CD4-positive, alpha-beta T cell (primary cell): ENCODE measurements at regions of chr14 and their contacts with region 1.

Region 1: DNA sequence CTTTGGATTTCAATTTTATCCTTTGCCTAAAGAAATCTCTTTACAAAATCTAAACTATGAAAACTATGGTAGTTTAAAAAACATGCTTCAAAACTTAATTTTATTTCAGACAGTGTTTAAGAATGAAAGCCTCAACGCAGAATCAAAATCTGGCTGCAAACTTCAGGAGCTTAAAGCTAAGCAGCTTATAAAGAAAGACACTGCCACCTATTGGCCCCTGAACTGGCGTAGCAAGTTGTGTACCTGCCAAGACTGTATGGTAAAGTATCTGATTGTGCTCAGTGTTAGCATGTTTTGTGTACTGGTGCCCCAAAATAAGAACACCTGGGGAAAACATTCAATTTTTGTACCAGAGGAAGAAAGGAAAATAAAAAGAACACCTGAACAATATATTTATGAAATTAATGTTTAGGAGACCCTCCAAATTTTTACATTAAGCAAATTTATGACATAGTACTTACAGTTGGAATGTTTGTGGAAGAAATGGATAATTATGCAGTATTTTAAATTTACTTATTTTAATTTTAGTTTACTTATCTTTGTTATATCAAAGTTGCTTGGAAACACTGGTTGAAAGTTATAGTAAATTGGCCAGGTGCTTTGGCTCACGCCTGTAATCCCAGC is 12.2 kb downstream of the UBR7 start:
- DNase-seq: peak in 13 of 14 experiments; percentile 17 to 82 (median 37)
- ATAC-seq: peak; percentile 93
- H3K4me3 ChIP-seq: no peak overlapping the region
- H3K4me3 Mint-ChIP-seq: no peak overlapping the region
- H3K27ac ChIP-seq: no peak overlapping the region
- H3K27ac Mint-ChIP-seq: no peak overlapping the region
- H3K4me1 ChIP-seq: no peaks in the 10 kb centered on the region
- H3K4me1 Mint-ChIP-seq: no peaks in the 10 kb centered on the region
- H3K27me3 ChIP-seq: no peaks in the 10 kb centered on the region
- H3K27me3 Mint-ChIP-seq: no peaks in the 10 kb centered on the region
- CTCF ChIP-seq: peak; percentile 79

Region 2: DNA sequence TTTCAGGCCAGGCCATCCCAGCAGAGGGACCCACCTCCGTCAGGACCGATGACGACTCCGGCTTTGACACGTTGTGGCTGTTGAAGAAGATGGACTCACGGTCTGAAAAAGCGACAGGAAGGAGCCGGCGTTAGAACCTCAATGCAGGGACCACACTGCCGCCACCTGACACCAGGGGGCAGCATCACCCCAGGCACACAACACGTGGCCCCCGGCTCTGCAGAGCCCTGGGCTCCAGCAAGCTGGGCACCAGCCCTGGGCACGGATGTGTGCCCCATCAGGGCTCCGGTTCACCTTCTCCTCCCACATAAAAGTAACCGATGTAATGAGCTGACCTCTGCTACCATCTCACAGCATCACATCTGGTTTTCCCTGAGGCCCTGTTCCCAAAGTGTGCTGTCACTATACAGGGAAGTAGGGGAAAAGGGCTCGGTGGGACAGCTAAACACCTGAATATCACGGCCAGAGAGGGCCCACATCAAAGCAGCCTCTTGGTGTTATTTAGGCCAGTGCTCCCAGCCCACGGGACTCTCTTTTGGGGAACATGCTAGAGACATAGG is 267.2 kb before region 1 on chr14:
- CTCF ChIA-PET with region 1: interaction called, 6 read pairs
- POLR2A ChIA-PET with region 1: no interaction called
- intact Hi-C with region 1: loop called (anchors 1 to 2 kb)
- DNase-seq: peak; percentile 57 to 87 (median 76)
- ATAC-seq: peak; percentile 97
- H3K4me3 ChIP-seq: no peak overlapping the region
- H3K4me3 Mint-ChIP-seq: no peak overlapping the region
- H3K27ac ChIP-seq: no peak overlapping the region
- H3K27ac Mint-ChIP-seq: no peak overlapping the region
- H3K4me1 ChIP-seq: peaks cover 8% of the 10 kb centered on the region
- H3K4me1 Mint-ChIP-seq: peaks cover 4% of the 10 kb centered on the region
- H3K27me3 ChIP-seq: no peaks in the 10 kb centered on the region
- H3K27me3 Mint-ChIP-seq: no peaks in the 10 kb centered on the region
- CTCF ChIP-seq: peak; percentile 91

Region 3: GRCh38 chr14:93007225-93007997 is 211.8 kb before region 1 on chr14:
- CTCF ChIA-PET with region 1: no interaction called
- POLR2A ChIA-PET with region 1: no interaction called
- intact Hi-C with region 1: no loop called
- DNase-seq: peak in 3 of 14 experiments; percentile 7 to 57 (median 42)
- ATAC-seq: no peak
- H3K4me3 ChIP-seq: no peak overlapping the region
- H3K4me3 Mint-ChIP-seq: no peak overlapping the region
- H3K27ac ChIP-seq: no peak overlapping the region
- H3K27ac Mint-ChIP-seq: no peak overlapping the region
- H3K4me1 ChIP-seq: no peaks in the 10 kb centered on the region
- H3K4me1 Mint-ChIP-seq: peaks cover 4% of the 10 kb centered on the region
- H3K27me3 ChIP-seq: no peaks in the 10 kb centered on the region
- H3K27me3 Mint-ChIP-seq: no peaks in the 10 kb centered on the region
- CTCF ChIP-seq: no peak

Region 4: DNA sequence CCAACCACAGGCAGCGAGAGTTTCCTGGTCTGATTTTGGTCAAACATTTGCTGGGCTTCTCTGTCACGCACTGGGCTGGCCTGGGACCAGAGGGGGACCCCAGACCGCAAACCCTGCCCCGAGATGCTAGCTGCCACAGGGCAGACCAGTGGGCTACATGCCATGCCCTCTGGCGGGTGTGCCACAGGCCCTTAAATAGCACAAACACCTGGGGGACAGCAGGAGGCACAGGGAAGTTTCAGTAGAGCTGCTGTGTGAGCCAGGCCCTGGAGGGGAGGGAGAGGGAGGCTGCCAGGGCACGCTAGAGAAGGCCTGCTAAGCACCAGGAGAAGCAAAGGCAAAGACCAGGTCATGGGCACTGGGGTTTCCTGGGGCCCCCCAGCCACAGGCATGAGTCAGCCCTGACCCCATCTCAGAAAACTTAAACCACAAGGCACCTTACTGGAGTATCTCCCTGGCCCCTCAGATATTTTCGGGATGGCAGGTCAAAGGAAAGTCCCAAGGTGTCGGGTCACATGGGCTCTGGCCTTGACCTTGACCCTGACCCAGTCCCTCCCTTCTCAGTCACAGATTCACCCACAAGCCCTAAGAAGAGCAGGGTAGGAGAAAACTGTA is 132.7 kb before region 1 on chr14:
- CTCF ChIA-PET with region 1: no interaction called
- POLR2A ChIA-PET with region 1: no interaction called
- intact Hi-C with region 1: no loop called
- DNase-seq: no peak
- ATAC-seq: no peak
- H3K4me3 ChIP-seq: no peak overlapping the region
- H3K4me3 Mint-ChIP-seq: no peak overlapping the region
- H3K27ac ChIP-seq: no peak overlapping the region
- H3K27ac Mint-ChIP-seq: no peak overlapping the region
- H3K4me1 ChIP-seq: peaks cover 21% of the 10 kb centered on the region
- H3K4me1 Mint-ChIP-seq: peaks cover 18% of the 10 kb centered on the region
- H3K27me3 ChIP-seq: no peaks in the 10 kb centered on the region
- H3K27me3 Mint-ChIP-seq: no peaks in the 10 kb centered on the region
- CTCF ChIP-seq: no peak

Region 5: GRCh38 chr14:93175492-93175891 is 43.7 kb before region 1 on chr14:
- CTCF ChIA-PET with region 1: interaction called, 4 read pairs
- POLR2A ChIA-PET with region 1: no interaction called
- intact Hi-C with region 1: loop called in 1 of 2 experiments (anchors 5 kb)
- DNase-seq: no peak
- ATAC-seq: no peak
- H3K4me3 ChIP-seq: no peak overlapping the region
- H3K4me3 Mint-ChIP-seq: no peak overlapping the region
- H3K27ac ChIP-seq: no peak overlapping the region
- H3K27ac Mint-ChIP-seq: no peak overlapping the region
- H3K4me1 ChIP-seq: no peaks in the 10 kb centered on the region
- H3K4me1 Mint-ChIP-seq: peaks cover 3% of the 10 kb centered on the region
- H3K27me3 ChIP-seq: peaks cover 0 to 3% of the 10 kb centered on the region in 2 experiments
- H3K27me3 Mint-ChIP-seq: no peaks in the 10 kb centered on the region
- CTCF ChIP-seq: no peak

Region 6: DNA sequence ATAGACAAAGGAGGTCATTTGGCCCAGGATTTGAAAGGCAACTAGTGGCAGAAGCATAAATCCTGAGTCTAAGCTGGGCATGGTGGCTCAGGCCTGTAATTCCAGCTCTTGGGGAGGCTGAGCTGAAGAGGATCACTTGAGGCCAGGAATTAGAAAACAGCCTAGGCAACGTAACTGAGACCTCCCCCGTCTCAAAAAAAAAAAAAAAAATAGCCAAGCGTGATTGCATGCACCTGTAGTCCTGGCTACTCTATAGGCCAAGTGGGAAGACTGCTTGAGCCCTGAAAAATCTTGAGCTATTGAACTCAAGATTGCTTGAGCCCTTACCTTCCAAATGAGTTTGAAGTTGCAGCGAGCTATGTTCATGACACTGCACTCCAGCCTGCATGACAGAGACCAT is 20.2 kb before region 1 on chr14:
- CTCF ChIA-PET with region 1: no interaction called
- POLR2A ChIA-PET with region 1: no interaction called
- intact Hi-C with region 1: no loop called
- DNase-seq: no peak
- ATAC-seq: no peak
- H3K4me3 ChIP-seq: no peak overlapping the region
- H3K4me3 Mint-ChIP-seq: no peak overlapping the region
- H3K27ac ChIP-seq: no peak overlapping the region
- H3K27ac Mint-ChIP-seq: no peak overlapping the region
- H3K4me1 ChIP-seq: peaks cover 1% of the 10 kb centered on the region
- H3K4me1 Mint-ChIP-seq: peaks cover 2% of the 10 kb centered on the region
- H3K27me3 ChIP-seq: no peaks in the 10 kb centered on the region
- H3K27me3 Mint-ChIP-seq: no peaks in the 10 kb centered on the region
- CTCF ChIP-seq: no peak

Region 7: GRCh38 chr14:93788543-93789227 is 569.5 kb after region 1 on chr14:
- CTCF ChIA-PET with region 1: no interaction called
- POLR2A ChIA-PET with region 1: no interaction called
- intact Hi-C with region 1: no loop called
- DNase-seq: no peak
- ATAC-seq: no peak
- H3K4me3 ChIP-seq: no peak overlapping the region
- H3K4me3 Mint-ChIP-seq: no peak overlapping the region
- H3K27ac ChIP-seq: no peak overlapping the region
- H3K27ac Mint-ChIP-seq: no peak overlapping the region
- H3K4me1 ChIP-seq: no peaks in the 10 kb centered on the region
- H3K4me1 Mint-ChIP-seq: no peaks in the 10 kb centered on the region
- H3K27me3 ChIP-seq: peaks cover 29 to 30% of the 10 kb centered on the region in 2 experiments
- H3K27me3 Mint-ChIP-seq: peaks cover 81% of the 10 kb centered on the region
- CTCF ChIP-seq: no peak